AG04450 (cell line): ENCODE measurements at regions of chr19 and their contacts with region 1.

Region 1: DNA sequence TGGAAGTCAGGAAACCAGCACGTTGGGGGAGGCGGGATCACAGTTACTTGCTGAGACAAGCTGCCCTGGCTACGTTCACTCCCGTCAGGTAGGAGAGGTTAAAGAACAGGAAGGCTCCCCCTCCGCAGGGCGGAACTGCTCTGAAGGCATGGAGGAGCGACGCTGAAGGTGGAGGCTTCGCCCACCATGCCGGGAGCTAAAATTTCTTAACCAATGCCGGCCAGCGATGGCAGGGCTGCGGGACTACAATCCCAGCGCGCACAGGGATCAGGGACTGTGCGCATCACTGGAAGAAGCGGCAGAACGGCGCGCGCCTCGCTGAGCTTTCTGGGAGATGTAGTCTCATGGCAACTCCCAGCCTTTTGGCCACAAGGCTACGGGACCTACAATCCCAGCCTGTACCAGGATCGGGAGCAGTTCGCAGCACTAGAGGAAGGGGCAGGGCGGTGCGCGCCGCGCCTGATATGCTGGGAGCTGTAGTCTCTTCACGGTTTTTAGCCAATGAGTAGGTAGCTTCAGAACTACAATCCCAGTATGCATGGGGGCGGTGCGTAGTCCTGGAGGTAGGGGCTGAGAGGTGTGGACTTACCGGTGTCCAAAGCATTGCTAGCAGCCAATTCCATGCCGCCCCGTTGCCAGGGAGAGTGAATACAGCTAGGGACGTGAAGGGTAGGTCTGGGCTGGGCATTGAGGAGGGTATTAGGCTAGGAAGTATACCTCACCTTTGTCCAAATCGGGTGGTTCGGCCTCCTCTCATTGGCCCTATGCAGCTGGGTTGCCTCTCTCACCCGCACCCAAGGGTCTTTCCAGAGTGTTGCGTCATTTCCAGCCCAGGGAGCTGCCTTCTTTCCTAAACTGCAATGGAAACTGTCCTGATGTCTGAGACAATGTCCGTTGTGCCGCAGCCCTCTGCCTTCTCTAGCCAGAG is 12.8 kb upstream of the ZNF682 start:
- DNase-seq: peak; percentile 94
- H3K4me3 ChIP-seq: peak overlapping the region; percentile 97
- H3K27ac ChIP-seq: peak overlapping the region; percentile 61
- H3K27me3 ChIP-seq: no peaks in the 10 kb centered on the region
- CTCF ChIP-seq: no peak

Region 2: GRCh38 chr19:19956434-19957075 is 95.5 kb before region 1 on chr19:
- CTCF ChIA-PET with region 1: no interaction called
- POLR2A ChIA-PET with region 1: no interaction called
- DNase-seq: no peak
- H3K4me3 ChIP-seq: no peak overlapping the region
- H3K27ac ChIP-seq: no peak overlapping the region
- H3K27me3 ChIP-seq: no peaks in the 10 kb centered on the region
- CTCF ChIP-seq: no peak

Region 3: DNA sequence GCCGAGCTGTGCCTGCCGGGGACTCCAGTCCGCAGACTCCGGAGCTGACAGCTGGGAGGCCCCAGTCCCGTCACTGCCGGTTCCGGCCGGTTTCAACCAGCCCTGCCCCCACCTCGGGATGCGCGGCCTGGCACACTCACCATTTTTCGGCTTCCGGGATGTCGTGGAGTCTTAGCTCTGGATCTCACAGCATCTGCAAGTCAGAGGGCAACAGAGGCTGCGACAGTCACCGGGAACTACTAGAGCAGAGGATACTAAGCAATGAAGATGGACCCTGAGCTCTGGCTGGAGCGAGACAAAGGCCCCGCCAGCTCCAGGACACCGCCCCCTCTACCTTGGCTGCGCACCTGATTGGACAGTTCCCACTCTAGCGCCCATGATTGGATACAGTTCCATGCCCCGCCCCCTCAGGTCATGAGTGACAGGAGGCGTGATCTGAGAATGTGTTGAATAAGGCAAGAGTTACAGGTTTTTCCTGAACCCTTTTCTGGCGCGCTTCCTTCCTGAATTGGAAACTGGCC is 12.8 kb before region 1 on chr19 and contains the start of gene ZNF682:
- CTCF ChIA-PET with region 1: interaction called, 6 read pairs
- POLR2A ChIA-PET with region 1: interaction called, 12 read pairs
- DNase-seq: peak; percentile 82
- H3K4me3 ChIP-seq: peak within 1 kb of the TSS; percentile 87
- H3K27ac ChIP-seq: peak within 1 kb of the TSS; percentile 61
- H3K27me3 ChIP-seq: no peaks in the 10 kb centered on the region
- CTCF ChIP-seq: no peak
- polyA plus RNA-seq, gene ZNF682: 2.0 and 2.5 TPM in 2 replicates